ENCODE measurements at regions of chr11 and their contacts with region 1.

Region 1: DNA sequence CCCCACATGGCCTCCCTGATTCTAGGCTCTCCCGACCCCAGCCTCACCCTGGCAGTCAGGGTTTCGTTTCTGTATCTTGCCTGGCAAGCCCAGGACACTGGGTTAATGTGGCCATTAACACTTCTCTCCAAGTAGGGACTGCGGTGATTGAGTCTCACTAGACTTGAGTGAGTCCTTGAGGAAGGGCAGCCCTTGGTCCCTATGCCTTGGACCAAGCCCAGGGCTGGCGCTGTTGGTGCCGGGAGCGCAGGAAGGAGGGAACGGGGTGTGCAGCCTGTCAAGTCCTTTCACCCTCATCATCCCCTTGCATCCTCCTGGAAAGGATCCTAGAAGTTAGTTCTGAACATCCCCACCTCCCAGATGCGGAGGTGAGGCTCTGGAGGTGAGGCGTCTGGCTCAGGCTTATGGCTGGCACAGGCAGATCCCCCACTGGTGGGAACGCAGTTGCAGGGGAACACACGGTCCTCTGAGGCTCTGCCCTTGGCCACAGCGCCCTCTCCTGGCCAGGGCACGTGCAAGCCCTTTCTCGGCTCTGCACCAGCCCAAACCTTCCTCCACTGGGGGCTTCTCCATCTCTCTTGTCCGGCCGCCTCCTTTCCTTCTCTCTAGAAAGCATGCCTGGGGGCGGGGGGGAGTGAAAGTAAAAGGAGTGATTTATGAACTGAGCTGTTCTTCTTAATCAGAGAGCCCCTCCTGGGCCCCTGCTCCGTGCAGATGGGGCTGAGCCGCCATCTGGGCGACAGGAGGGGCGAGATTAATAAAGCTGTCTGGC is 56.7 kb downstream of the TP53I11 start:
- DNase-seq: peak; percentile 37 to 86
- H3K4me3 ChIP-seq: no peak overlapping the region
- H3K4me1 ChIP-seq: no peaks in the 10 kb centered on the region
- H3K27me3 ChIP-seq: no peaks in the 10 kb centered on the region

Region 2: DNA sequence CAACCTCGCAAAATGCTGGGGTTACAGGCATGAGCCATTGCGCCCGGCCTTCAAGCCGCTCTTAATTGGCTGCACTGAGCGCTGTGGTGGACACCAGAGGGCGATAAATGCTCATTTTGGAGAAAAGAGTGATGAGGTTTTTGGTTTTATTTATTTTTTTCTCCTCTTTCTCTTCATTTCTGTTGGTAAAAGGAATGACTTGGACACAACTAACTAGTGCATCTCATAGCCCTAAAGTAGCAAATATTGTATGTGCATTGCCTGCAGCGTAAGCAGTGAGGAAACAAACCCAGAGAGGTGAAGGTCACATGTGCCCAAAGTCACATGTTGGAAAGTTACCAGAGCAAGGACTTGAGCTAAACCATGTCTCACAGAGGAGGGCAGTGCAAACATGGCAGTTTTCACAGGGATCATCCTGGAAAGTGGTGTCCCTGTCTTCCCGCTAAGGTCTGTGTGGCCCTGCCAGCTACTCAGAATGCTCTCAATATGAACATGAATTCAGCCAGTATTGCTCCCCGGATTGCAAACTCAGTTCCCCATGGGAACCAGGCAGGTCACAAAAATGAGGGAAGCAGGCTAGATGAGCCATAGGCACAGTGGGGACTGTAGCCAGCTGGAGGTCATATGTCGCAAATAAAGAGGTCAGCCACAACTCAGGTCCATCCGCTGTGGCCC is 337.2 kb before region 1 on chr11:
- in situ Hi-C with region 1: loop called (anchors 10 kb)
- DNase-seq: peak; percentile 18 to 69
- H3K4me3 ChIP-seq: no peak overlapping the region
- H3K4me1 ChIP-seq: 0 out of 2 replicates have a peak, but pooled peaks cover 3% of the 10 kb centered on the region
- H3K27me3 ChIP-seq: no peaks in the 10 kb centered on the region

Region 3: DNA sequence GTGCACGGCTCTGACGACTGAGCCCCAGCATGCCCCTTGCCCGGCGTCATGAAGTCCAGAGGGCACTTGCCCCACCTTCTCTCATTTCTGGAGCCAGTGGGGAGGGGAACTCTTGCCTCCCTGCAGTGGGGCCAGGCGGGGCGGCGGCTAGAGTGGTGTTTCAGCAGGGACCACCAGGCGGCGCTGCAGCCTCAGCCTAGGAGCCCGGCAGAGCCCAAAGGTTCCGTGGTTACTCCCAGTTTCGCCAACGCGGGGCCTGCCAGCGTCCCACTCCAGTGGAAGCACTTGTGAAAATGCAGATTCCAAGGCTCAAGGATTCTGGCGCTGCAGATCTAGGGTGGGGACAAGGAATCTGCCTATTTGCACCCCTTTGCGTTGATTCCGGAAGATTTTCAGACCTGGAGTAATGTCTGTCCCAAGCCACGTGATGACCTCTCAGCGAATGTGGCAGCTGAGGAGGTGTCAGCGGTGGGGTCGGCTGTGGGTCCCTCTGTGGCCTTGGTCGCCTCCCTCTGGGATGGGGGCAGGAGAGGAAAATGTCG is 272.8 kb before region 1 on chr11:
- in situ Hi-C with region 1: loop called (anchors 5 kb)
- DNase-seq: peak; percentile 51 to 88
- H3K4me3 ChIP-seq: no peak overlapping the region
- H3K4me1 ChIP-seq: no peaks in the 10 kb centered on the region
- H3K27me3 ChIP-seq: no peaks in the 10 kb centered on the region

Region 4: GRCh38 chr11:44727373-44728287 is 166.4 kb before region 1 on chr11:
- in situ Hi-C with region 1: loop called (anchors 5 kb)
- DNase-seq: peak; percentile 79 to 89
- H3K4me3 ChIP-seq: peak overlapping the region; percentile 72
- H3K4me1 ChIP-seq: peaks cover 17% of the 10 kb centered on the region
- H3K27me3 ChIP-seq: no peaks in the 10 kb centered on the region

Region 5: GRCh38 chr11:44993971-44994704 is 100.1 kb after region 1 on chr11:
- in situ Hi-C with region 1: no loop called
- DNase-seq: no peak
- H3K4me3 ChIP-seq: no peak overlapping the region
- H3K4me1 ChIP-seq: no peaks in the 10 kb centered on the region
- H3K27me3 ChIP-seq: no peaks in the 10 kb centered on the region

Region 6: DNA sequence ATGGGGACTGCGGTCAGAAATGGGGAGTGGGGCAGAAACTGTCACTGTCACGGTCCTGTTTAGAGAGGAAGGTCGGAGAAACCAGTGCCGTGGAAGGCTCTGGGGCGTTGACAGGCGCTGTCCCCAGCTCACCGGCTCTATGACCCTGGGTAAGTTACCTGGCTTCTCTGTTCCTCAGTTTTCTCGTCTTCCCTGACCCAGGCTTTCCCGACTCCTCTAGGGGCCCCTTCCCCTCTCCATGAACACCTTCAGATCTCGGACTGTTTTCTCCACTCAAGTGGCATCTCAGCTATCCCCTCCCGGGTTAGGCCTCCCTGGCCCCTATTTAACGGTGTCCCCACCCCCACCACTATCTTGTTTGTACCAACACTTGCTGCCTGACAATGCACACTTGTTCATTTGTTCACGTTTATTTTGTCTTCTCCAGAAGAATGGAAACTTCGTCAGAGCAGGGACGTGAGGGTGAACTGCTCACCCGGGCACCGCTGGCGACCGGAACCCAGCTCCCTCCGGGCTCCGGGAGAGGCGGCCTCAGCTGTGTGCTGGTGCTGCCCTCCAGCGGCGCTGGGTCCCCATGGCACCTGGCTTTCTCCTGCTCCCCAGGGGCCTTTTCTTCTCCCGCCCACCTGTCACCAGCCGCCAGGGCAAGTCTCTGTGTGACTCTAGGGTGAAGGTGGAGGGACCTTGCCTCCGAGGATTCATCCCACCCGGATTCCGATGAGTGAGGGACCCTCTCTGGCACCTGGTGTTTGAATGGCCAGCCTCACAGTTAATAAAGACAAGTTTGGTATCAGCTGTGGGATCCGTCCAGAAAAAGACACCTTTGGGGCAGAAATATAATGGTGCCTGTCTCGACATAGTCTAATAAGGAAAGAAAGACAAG is 877.8 kb after region 1 on chr11:
- in situ Hi-C with region 1: no loop called
- DNase-seq: peak; percentile 83 to 91
- H3K4me3 ChIP-seq: peak overlapping the region; percentile 29
- H3K4me1 ChIP-seq: peaks cover 4% of the 10 kb centered on the region; the same call in 1 of the 2 replicates
- H3K27me3 ChIP-seq: peaks cover 4% of the 10 kb centered on the region; the same call in 1 of the 2 replicates